K562 (cell line): ENCODE measurements at regions of chr12 and their contacts with region 1.

Region 1: GRCh38 chr12:53159195-53159839 is 21.2 kb upstream of the ZNF740 start:
- DNase-seq: peak; percentile 90 to 94 (median 92)
- ATAC-seq: peak; percentile 97
- H3K4me3 ChIP-seq: no peak overlapping the region
- H3K27ac ChIP-seq: peak overlapping the region; percentile 54; the same call in 2 of the 3 replicates
- H3K4me1 ChIP-seq: peaks cover 11 to 16% of the 10 kb centered on the region in 2 experiments; a peak in 4 of 5 replicates
- H3K27me3 ChIP-seq: no peaks in the 10 kb centered on the region
- CTCF ChIP-seq: peak; percentile 97 to 99 (median 97)
- EP300 ChIP-seq: peak; percentile 56; the same call in 1 of the 2 replicates
- POLR2A ChIP-seq: no peak
- RAD21 ChIP-seq: peak; percentile 76 to 89

Region 2: GRCh38 chr12:53171725-53172329 is 12.5 kb after region 1 on chr12:
- CTCF ChIA-PET with region 1: no interaction called
- POLR2A ChIA-PET with region 1: interaction called, 15 read pairs
- in situ Hi-C with region 1: no loop called
- intact Hi-C with region 1: no loop called
- DNase-seq: peak in 2 of 4 experiments; percentile 42
- ATAC-seq: peak; percentile 39
- H3K4me3 ChIP-seq: no peak overlapping the region
- H3K27ac ChIP-seq: no peak overlapping the region
- H3K4me1 ChIP-seq: peaks cover 13 to 22% of the 10 kb centered on the region in 2 experiments
- H3K27me3 ChIP-seq: no peaks in the 10 kb centered on the region
- CTCF ChIP-seq: no peak
- EP300 ChIP-seq: no peak
- POLR2A ChIP-seq: no peak
- RAD21 ChIP-seq: no peak

Region 3: GRCh38 chr12:53190108-53190729 is 30.9 kb after region 1 on chr12:
- CTCF ChIA-PET with region 1: interaction called, 7 read pairs
- POLR2A ChIA-PET with region 1: interaction called, 11 read pairs
- in situ Hi-C with region 1: no loop called
- intact Hi-C with region 1: loop called (anchors 1 kb)
- DNase-seq: peak; percentile 65 to 80 (median 77)
- ATAC-seq: peak; percentile 94
- H3K4me3 ChIP-seq: no peak overlapping the region
- H3K27ac ChIP-seq: no peak overlapping the region
- H3K4me1 ChIP-seq: peaks cover 0 to 6% of the 10 kb centered on the region in 2 experiments; a peak in 3 of 5 replicates
- H3K27me3 ChIP-seq: no peaks in the 10 kb centered on the region
- CTCF ChIP-seq: peak; percentile 77 to 93 (median 88)
- EP300 ChIP-seq: no peak
- POLR2A ChIP-seq: peak; percentile 30; the same call in 1 of the 2 replicates
- RAD21 ChIP-seq: peak; percentile 50 to 73

Region 4: DNA sequence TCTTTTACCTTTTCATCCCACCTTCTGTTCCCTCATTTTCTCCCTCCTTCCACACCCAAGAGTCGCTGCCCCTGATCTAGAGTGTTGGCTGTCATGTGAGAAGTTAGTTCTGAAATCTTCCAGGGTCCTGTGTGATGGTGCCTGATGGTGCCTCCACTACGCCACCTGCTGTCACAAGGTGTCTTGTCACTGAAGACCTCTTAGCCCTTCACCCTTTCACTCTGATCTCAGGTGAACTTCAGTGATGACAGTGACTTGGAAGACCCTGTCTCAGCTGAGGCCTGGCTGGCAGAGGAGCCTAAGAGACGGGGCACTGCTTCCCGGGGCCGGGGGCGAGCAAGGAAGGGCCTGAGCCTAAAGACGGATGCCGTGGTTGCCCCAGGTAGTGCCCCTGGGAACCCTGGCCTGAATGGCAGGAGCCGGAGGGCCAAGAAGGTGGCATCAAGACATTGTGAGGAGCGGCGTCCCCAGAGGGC is 128.5 kb after region 1 on chr12:
- CTCF ChIA-PET with region 1: interaction called, 7 read pairs
- POLR2A ChIA-PET with region 1: interaction called, 4 read pairs
- in situ Hi-C with region 1: no loop called
- intact Hi-C with region 1: loop called (anchors 5 kb)
- DNase-seq: peak; percentile 67 to 78 (median 74)
- ATAC-seq: peak; percentile 96
- H3K4me3 ChIP-seq: no peak overlapping the region
- H3K27ac ChIP-seq: no peak overlapping the region
- H3K4me1 ChIP-seq: peaks cover 0 to 6% of the 10 kb centered on the region in 2 experiments; a peak in 1 of 5 replicates
- H3K27me3 ChIP-seq: no peaks in the 10 kb centered on the region
- CTCF ChIP-seq: peak; percentile 79 to 89 (median 83)
- EP300 ChIP-seq: no peak
- POLR2A ChIP-seq: no peak
- RAD21 ChIP-seq: peak; percentile 89 to 93